CD8-positive, alpha-beta T cell (primary cell): ENCODE measurements at regions of chr16 and their contacts with region 1.

Region 1: DNA sequence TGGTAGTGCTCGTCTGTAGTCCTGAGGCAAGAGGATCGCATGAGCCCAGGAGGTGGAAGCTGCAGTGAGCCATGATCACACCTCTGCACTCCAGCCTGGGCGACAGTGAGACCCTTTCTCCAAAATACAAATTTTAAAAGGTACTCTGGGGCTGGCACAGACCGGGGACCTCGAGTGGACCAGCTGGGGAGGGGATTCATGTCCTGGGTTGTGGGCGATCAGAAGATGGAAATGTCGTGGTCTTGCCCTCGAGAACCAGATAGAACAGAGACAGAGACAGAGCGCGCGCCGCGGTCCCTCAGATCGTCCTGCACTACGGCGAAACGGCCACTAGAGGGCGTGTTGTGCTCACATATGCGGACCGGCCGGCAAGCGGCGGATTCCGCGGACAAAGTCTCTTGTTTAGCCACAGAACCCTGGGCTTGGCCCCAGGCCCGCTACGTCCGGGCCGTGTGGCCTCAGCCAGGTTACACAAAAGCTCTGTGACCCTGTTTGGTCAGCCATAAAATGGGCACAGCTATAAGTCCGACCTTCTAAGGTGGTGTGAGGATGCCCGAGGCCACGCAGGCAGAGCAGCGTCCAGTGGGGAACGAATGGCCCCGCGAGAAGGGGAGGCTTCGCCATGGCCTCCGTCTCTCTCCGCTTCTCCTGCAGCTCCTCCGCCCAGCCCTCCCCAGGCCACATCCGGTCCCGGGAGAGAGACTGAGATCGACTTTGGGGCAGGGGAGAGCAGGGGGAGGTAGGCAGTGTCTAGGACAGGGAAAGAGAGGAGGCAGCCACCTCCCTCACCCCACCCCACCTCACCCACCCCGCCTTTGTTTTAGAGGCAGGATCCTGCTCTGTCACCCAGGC is 14.6 kb upstream of the SBK1 start:
- DNase-seq: peak; percentile 72 to 95 (median 88)
- ATAC-seq: peak; percentile 80
- H3K4me3 ChIP-seq: peak overlapping the region; percentile 60 to 90
- H3K4me3 Mint-ChIP-seq: peak overlapping the region; percentile 81
- H3K27ac ChIP-seq: peak overlapping the region; percentile 57 to 68
- H3K27ac Mint-ChIP-seq: peak overlapping the region; percentile 95
- H3K4me1 ChIP-seq: peaks cover 45% of the 10 kb centered on the region
- H3K4me1 Mint-ChIP-seq: peaks cover 40% of the 10 kb centered on the region
- H3K27me3 ChIP-seq: no peaks in the 10 kb centered on the region
- H3K27me3 Mint-ChIP-seq: no peaks in the 10 kb centered on the region
- CTCF ChIP-seq: peak; percentile 95

Region 2: DNA sequence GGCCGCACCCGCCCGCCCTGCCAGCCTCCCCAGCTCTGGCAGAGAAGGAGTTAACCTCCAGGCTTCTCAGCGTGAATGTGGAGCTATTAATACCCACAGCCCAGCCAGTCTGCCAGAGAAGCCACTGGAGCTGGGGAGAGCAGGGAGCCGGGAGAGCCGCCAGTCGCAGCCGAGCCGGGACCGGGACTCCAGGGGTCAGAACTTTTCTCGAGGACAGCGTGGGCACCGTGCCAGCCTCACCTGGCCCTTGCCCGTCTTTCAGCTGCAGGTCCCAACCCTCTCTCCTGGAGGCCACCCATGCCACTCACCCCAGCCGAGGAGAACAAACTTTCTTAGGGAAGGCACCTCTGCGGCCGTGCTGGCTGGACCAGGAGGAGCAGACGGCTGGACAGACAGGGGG is 19.2 kb before region 1 on chr16:
- CTCF ChIA-PET with region 1: interaction called, 20 read pairs
- POLR2A ChIA-PET with region 1: interaction called, 5 read pairs
- intact Hi-C with region 1: no loop called
- DNase-seq: no peak
- ATAC-seq: no peak
- H3K4me3 ChIP-seq: no peak overlapping the region
- H3K4me3 Mint-ChIP-seq: no peak overlapping the region
- H3K27ac ChIP-seq: no peak overlapping the region
- H3K27ac Mint-ChIP-seq: no peak overlapping the region
- H3K4me1 ChIP-seq: peaks cover 21% of the 10 kb centered on the region
- H3K4me1 Mint-ChIP-seq: peaks cover 12% of the 10 kb centered on the region
- H3K27me3 ChIP-seq: no peaks in the 10 kb centered on the region
- H3K27me3 Mint-ChIP-seq: no peaks in the 10 kb centered on the region
- CTCF ChIP-seq: no peak

Region 3: DNA sequence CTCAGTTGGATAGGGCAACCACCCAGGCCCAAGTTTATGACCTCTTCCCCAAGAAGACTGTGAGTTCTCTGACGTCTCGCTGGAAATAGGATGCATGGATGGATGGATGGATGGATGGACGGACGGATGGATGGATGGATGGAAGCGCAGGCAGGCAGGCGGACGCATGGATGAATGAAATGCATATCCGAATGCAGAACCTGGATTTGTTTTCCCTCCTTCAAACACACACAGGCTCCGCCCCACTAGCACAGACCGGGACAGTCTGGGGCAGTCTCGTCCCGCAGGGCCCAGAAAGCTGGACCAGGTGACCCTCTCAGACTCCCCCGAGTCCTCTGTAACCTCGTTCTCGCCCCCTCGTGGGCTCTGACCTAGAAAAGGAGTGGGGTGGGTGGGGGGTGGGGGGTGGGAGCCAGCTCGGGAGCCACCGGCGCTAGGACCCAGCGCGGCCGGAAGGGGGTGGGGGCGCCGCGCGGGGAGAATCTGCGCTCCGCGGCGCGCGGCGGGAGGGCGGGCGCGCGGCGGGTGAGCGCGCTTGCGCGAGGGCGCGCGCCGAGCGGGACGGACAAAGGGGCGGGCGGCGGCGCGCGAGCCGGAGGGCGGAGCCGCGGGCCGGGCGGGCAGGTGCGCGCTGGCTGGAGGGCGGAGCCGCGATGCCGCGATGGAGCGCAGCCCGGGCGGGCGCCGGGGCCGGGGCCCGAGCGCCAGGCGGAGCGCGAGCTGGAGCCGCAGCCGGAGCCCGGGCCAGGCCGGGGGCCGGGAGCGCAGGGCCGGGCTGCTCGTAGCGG is 14.3 kb after region 1 on chr16 and contains the start of gene SBK1:
- CTCF ChIA-PET with region 1: interaction called, 131 read pairs
- POLR2A ChIA-PET with region 1: interaction called, 22 read pairs
- intact Hi-C with region 1: loop called (anchors 1 kb)
- DNase-seq: peak; percentile 68 to 94 (median 84)
- ATAC-seq: peak; percentile 90
- H3K4me3 ChIP-seq: peak within 1 kb of the TSS; percentile 82 to 92
- H3K4me3 Mint-ChIP-seq: peak within 1 kb of the TSS; percentile 94
- H3K27ac ChIP-seq: peak within 1 kb of the TSS; percentile 56 to 75
- H3K27ac Mint-ChIP-seq: peak within 1 kb of the TSS; percentile 93
- H3K4me1 ChIP-seq: peaks cover 74% of the 10 kb centered on the region
- H3K4me1 Mint-ChIP-seq: peaks cover 67% of the 10 kb centered on the region
- H3K27me3 ChIP-seq: no peaks in the 10 kb centered on the region
- H3K27me3 Mint-ChIP-seq: no peaks in the 10 kb centered on the region
- CTCF ChIP-seq: no peak
- total RNA-seq, gene SBK1: 16.5 to 17.1 TPM

Region 4: GRCh38 chr16:28309811-28310311 is 32.1 kb after region 1 on chr16:
- CTCF ChIA-PET with region 1: interaction called, 431 read pairs
- POLR2A ChIA-PET with region 1: interaction called, 53 read pairs
- intact Hi-C with region 1: loop called (anchors 1 kb)
- DNase-seq: peak; percentile 72 to 97 (median 92)
- ATAC-seq: peak; percentile 88
- H3K4me3 ChIP-seq: peak overlapping the region; percentile 0 to 48
- H3K4me3 Mint-ChIP-seq: peak overlapping the region; percentile 54
- H3K27ac ChIP-seq: peak overlapping the region; percentile 70 to 83
- H3K27ac Mint-ChIP-seq: peak overlapping the region; percentile 95
- H3K4me1 ChIP-seq: peaks cover 75% of the 10 kb centered on the region
- H3K4me1 Mint-ChIP-seq: peaks cover 76% of the 10 kb centered on the region
- H3K27me3 ChIP-seq: no peaks in the 10 kb centered on the region
- H3K27me3 Mint-ChIP-seq: no peaks in the 10 kb centered on the region
- CTCF ChIP-seq: no peak

Region 5: DNA sequence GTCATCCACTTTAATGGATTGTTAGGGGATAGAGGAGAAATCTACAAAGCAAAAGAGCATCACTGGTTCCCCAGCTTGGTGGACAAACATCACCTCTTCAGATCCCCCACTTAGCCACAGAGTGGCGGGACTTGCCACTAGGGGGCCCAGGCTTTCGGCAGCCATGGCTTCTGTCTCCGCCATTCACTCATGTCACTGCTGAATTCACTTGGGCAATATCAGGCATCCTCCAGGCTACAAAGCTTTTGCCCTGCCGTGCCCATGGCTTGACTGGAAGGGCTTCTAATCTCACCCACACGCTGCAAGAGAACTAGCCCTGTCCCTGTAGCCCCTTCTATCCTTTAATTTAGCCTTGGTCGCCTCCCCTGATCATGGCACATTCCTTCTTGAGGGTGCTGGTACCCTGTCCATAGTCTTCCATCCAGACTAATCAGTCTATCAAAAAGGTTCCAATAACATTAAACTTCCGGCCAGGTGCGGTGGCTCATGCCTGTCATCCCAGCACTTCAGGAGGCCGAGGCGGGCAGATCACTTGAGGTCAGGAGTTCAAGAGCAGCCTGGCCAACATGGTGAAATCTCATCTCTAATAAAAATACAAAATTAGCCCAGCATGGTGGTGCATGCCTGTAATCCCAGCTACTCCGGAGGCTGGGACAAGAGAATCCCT is 49.3 kb after region 1 on chr16:
- CTCF ChIA-PET with region 1: interaction called, 431 read pairs
- POLR2A ChIA-PET with region 1: interaction called, 4 read pairs
- intact Hi-C with region 1: no loop called
- DNase-seq: peak; percentile 50 to 79 (median 70)
- ATAC-seq: peak; percentile 89
- H3K4me3 ChIP-seq: no peak overlapping the region
- H3K4me3 Mint-ChIP-seq: no peak overlapping the region
- H3K27ac ChIP-seq: no peak overlapping the region
- H3K27ac Mint-ChIP-seq: peak overlapping the region; percentile 18
- H3K4me1 ChIP-seq: no peaks in the 10 kb centered on the region
- H3K4me1 Mint-ChIP-seq: peaks cover 8% of the 10 kb centered on the region
- H3K27me3 ChIP-seq: no peaks in the 10 kb centered on the region
- H3K27me3 Mint-ChIP-seq: no peaks in the 10 kb centered on the region
- CTCF ChIP-seq: peak; percentile 74

Region 6: DNA sequence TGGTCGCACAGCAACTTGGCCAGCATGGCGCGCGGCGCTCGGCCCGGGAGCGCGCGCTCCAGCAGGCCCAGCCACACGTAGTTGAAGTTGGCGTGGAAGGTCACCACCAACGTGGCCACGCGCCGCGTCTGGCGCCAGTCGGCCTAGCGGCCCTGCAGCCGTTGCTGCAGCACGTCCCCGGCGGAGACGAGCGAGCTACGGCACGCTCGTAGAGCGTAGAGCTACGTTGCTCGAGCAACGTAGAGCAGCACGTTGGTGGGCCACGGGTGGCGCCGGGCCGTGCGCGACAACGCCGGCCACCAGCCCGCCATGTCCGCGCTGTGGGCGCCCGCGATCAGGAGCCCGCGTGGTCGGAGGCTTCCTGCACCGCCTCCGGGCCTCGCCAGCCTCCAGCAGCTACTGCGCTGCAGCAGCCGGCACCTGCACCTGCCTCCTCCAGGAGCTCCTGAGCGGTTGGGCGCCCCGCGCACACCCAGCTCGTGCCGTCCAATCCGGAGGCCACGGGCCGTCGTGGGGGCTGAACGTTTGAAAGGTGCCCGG is 345.5 kb after region 1 on chr16:
- CTCF ChIA-PET with region 1: no interaction called
- POLR2A ChIA-PET with region 1: no interaction called
- intact Hi-C with region 1: loop called in 1 of 2 experiments (anchors 10 kb)
- DNase-seq: peak; percentile 32 to 81 (median 65)
- ATAC-seq: peak; percentile 97
- H3K4me3 ChIP-seq: peak overlapping the region; percentile 45 to 56
- H3K4me3 Mint-ChIP-seq: peak overlapping the region; percentile 85
- H3K27ac ChIP-seq: peak overlapping the region in 1 of 2 experiments; percentile 18
- H3K27ac Mint-ChIP-seq: peak overlapping the region; percentile 55
- H3K4me1 ChIP-seq: peaks cover 7% of the 10 kb centered on the region
- H3K4me1 Mint-ChIP-seq: peaks cover 26% of the 10 kb centered on the region
- H3K27me3 ChIP-seq: no peaks in the 10 kb centered on the region
- H3K27me3 Mint-ChIP-seq: no peaks in the 10 kb centered on the region
- CTCF ChIP-seq: no peak

Region 7: DNA sequence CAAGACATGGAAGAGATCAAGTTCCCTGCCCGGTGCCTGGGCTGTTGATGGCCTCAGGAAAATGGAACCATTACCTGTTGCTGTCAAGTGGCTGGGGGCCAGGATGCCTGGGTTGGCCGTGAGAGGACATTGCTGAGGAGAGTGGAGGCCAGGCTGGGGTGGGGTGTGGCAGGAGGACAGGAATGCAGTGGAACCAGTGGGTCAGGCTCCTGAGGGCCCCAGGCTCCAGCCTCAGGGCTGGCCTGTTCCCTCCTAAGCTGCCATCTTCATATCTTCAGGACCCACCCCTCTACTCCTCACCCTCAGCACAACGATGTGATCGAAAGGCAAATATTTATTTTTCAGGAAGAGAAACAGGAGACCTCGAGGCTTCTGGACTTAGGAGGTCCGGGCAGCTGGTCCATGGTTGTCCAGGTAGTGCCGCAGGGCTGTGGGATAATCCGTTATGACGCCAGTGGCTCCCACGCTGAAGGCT is 1826.8 kb after region 1 on chr16:
- CTCF ChIA-PET with region 1: no interaction called
- POLR2A ChIA-PET with region 1: no interaction called
- intact Hi-C with region 1: no loop called
- DNase-seq: no peak
- ATAC-seq: no peak
- H3K4me3 ChIP-seq: no peak overlapping the region
- H3K4me3 Mint-ChIP-seq: no peak overlapping the region
- H3K27ac ChIP-seq: no peak overlapping the region
- H3K27ac Mint-ChIP-seq: no peak overlapping the region
- H3K4me1 ChIP-seq: no peaks in the 10 kb centered on the region
- H3K4me1 Mint-ChIP-seq: no peaks in the 10 kb centered on the region
- H3K27me3 ChIP-seq: no peaks in the 10 kb centered on the region
- H3K27me3 Mint-ChIP-seq: no peaks in the 10 kb centered on the region
- CTCF ChIP-seq: no peak